Cardiac septum (tissue), 1 donor: ENCODE measurements at regions of chr12 and their contacts with region 1.

Region 1: GRCh38 chr12:31589904-31590641 is 863 bp downstream of the DENND5B start:
- DNase-seq: peak; percentile 84

Region 2: GRCh38 chr12:31325877-31326631 is 264.0 kb before region 1 on chr12 and contains the start of gene SINHCAF:
- intact Hi-C with region 1: loop called (anchors 5 kb)
- DNase-seq: peak; percentile 100
- total RNA-seq, gene SINHCAF: 10.3 TPM

Region 3: DNA sequence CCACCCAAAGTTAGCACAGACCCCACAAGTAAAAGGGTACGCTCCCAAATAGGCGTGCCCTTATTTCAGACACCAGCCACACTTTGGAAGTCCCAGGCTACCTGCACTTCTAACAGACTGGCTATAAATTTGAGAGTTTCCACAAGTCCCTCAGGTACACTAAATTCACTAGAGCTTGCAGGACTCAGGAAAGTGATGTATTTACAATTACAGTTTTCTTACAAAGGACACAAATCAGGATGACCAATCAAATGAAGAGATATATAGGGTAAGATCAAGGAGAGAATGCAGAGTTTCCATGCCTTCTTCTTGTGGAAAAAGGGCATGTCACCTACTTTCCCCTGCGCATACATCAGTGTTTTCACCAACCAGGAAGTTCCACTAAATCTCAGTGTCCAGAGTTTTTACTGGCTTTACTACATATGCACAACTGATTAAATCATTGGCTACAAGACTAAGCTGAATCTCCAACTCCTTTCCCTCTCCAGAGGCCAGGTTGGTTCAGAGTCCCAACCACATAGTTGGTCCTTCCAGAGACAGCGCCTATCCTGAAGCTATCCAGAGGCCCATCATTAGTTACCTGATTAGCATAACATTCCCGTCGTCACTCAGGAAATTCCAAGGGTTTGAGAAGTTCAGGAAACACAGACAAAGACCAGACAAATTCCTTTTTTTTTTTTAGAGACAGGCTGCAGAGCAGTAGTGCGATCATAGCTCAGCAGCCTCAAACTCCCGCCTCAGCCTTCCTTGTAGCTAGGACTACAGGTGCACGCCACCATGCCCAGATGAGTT is 83.4 kb before region 1 on chr12:
- intact Hi-C with region 1: loop called (anchors 10 kb)
- DNase-seq: no peak

Region 4: DNA sequence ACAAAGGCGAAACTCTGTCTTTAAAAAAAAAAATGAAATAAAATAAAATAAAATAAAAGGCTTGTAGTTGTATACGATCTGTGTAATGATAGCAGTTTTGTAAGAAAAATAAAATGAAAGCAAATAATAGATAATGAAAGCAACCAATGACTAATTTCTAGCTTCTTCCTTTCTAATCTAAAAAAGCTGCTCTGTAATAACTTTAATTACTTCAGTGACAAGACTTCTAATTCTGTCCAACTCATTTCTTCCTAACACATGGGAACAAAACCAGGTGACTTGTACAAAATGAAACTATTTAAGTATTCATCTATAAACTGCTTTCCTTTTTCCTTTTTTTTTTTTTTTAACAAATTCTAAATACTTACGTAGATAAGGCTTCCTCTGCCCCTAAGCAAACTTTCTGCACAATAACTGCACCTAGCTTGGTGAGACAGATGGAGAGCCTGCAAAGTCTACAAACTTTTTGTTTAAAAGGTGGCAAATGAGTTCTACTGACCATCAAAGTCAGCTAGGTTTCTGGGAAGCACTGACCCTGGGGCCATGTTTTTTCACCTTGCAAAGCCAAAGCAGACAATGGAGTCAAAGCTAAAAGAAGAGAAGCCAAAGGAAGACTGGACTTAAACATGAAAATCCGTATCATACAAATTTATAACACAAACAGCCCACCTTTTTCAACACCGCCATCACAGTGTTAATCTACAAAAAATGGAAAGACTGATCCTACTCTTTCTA is 27.3 kb before region 1 on chr12:
- intact Hi-C with region 1: no loop called
- DNase-seq: no peak

Region 5: GRCh38 chr12:31629756-31630732 is 40.0 kb after region 1 on chr12:
- intact Hi-C with region 1: loop called (anchors 1 kb)
- DNase-seq: no peak

Region 6: DNA sequence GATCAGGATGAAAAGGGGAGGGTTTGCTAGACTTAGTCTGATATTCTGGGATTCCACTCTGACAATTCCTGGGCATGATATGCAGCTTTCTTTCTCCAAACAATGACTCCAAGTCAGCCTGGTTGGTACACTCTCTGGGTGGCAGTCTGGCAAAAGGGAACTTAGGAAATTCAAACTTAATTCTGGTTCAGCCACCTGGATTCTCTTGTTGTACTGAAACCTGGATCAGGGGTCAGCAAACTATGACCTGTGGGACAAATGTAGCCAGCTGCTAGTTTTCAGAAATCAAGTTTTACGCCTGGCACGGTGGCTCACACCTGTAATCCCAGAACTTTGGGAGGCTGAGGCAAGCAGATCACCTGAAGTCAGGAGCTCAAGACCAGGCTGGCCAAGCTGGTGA is 132.5 kb after region 1 on chr12:
- intact Hi-C with region 1: no loop called
- DNase-seq: no peak